ENCODE measurements at regions of chr10 and their contacts with region 1.

Region 1: GRCh38 chr10:68606918-68607317 is 46.8 kb downstream of the TET1 start:
- DNase-seq: no peak
- H3K4me3 ChIP-seq: no peak overlapping the region
- H3K27ac ChIP-seq: peak overlapping the region; percentile 3
- H3K4me1 ChIP-seq: peaks cover 7% of the 10 kb centered on the region
- H3K27me3 ChIP-seq: no peaks in the 10 kb centered on the region
- CTCF ChIP-seq: no peak

Region 2: GRCh38 chr10:68566351-68566750 is 40.6 kb before region 1 on chr10:
- CTCF ChIA-PET with region 1: no interaction called
- POLR2A ChIA-PET with region 1: interaction called, 31 read pairs
- intact Hi-C with region 1: no loop called
- DNase-seq: no peak
- H3K4me3 ChIP-seq: no peak overlapping the region
- H3K27ac ChIP-seq: peak overlapping the region; percentile 18
- H3K4me1 ChIP-seq: peaks cover 10% of the 10 kb centered on the region
- H3K27me3 ChIP-seq: no peaks in the 10 kb centered on the region
- CTCF ChIP-seq: no peak

Region 3: GRCh38 chr10:68594405-68594804 is 12.5 kb before region 1 on chr10:
- CTCF ChIA-PET with region 1: interaction called, 11 read pairs
- POLR2A ChIA-PET with region 1: no interaction called
- intact Hi-C with region 1: no loop called
- DNase-seq: no peak
- H3K4me3 ChIP-seq: no peak overlapping the region
- H3K27ac ChIP-seq: peak overlapping the region; percentile 29
- H3K4me1 ChIP-seq: peaks cover 9% of the 10 kb centered on the region
- H3K27me3 ChIP-seq: no peaks in the 10 kb centered on the region
- CTCF ChIP-seq: no peak

Region 4: DNA sequence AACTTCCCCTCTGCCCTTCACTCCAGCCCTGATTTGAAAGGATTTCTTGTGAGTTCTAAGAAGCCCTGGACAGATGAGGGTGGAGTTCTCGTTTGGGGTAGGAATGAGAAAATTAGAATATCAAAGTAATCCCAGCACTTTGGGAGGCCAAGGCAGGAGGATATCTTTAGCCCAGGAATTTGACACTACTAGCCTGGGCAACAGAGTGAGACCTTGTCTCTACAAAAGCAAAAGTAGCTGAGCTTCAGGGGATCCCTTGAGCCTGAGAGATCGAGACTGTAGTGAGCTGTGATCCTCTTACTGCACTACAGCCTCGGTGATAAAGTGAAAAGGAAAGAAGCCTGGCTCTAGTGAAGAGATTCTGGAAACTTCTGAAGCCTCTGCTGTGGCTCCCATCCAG is 29.4 kb after region 1 on chr10:
- CTCF ChIA-PET with region 1: no interaction called
- POLR2A ChIA-PET with region 1: no interaction called
- intact Hi-C with region 1: no loop called
- DNase-seq: no peak
- H3K4me3 ChIP-seq: no peak overlapping the region
- H3K27ac ChIP-seq: no peak overlapping the region
- H3K4me1 ChIP-seq: no peaks in the 10 kb centered on the region
- H3K27me3 ChIP-seq: no peaks in the 10 kb centered on the region
- CTCF ChIP-seq: no peak